RWPE1 (cell line): ENCODE measurements at regions of chr17 and their contacts with region 1.

Region 1: DNA sequence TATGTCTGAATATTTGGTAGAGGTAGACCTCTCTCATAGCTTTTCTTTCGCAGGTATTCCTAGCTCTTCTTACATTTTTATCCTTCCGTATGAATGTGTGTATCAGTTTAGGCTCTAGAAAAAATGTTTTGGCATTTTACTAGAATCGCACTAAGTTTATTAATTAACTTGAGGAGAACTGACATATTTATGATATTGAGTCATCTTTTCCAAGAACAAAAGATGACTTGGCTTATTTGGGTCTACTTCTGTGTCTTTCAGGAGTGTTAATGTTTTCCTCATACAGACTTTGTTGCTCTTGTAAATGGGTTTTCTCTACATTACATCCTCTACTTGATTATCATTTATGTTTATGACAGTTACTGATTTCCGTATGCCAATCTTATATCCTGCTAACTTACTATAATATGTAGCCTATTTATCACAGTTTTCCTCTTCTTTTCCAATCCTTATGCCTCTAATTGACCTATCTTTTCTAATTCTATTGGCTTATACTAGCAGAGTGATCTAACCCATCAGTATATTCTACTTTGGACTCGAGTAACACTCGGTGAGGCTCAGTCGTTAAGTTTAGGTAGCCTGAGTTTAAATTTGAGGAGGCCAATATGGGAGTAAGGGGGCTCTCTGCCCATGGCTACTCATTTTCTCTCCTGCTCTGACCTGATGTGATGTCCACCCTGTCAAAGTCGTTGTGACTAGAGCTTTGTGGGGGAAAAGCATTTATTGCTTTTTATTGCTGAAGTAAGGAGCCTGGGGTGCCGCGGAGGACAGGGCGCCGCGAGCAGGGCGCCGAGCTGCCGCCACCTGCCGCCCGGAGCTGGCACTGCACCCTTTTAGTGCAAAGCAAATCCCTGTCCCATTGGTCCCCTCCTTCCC is 20.0 kb downstream of the ST6GALNAC1 start:
- DNase-seq: peak; percentile 72
- H3K27ac ChIP-seq: no peak overlapping the region
- CTCF ChIP-seq: peak; percentile 98

Region 2: GRCh38 chr17:76557368-76558197 is 65.9 kb before region 1 on chr17:
- CTCF ChIA-PET with region 1: interaction called, 14 read pairs
- POLR2A ChIA-PET with region 1: no interaction called
- DNase-seq: peak; percentile 83
- H3K27ac ChIP-seq: peak overlapping the region; percentile 94
- CTCF ChIP-seq: peak; percentile 55

Region 3: GRCh38 chr17:76585818-76586593 is 37.5 kb before region 1 on chr17 and contains the start of gene ST6GALNAC2:
- CTCF ChIA-PET with region 1: interaction called, 21 read pairs
- POLR2A ChIA-PET with region 1: no interaction called
- DNase-seq: peak; percentile 55
- H3K27ac ChIP-seq: peak within 1 kb of the TSS; percentile 96
- CTCF ChIP-seq: peak; percentile 79

Region 4: DNA sequence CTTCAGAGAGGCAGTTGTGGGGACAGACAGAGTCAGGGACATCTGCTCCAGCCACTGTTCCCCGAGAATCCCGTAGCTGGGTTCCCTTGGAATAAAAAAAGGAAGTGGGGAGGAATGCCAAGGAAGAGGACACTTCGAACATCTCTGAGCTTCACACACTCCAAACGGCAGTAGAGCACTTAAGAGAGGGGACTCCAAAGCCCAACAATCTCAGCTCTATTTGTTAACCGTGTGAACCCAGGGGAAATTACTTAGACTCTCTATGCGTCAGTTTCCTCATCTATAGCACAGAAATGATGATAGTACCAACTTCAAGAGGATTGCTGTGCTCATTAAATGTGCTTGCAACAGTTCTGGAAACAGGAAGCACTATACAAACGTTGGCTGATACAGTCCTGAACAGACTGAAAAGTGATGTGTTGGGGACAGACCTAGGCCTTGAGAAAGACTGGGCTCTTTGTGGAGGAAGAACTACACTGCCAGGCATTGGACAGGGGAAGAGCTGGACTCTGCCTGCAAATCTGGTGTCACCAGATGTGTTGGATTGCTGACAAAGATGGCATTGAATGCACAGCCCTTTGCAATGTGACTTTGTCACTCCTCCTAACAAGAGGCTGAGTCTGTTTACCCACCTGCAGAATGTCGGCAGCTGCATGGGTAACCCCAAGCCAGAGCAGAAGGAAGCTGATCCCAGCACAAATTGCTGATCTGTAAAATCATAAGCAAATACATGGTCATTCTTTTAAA is 25.6 kb before region 1 on chr17:
- CTCF ChIA-PET with region 1: interaction called, 28 read pairs
- POLR2A ChIA-PET with region 1: no interaction called
- DNase-seq: no peak
- H3K27ac ChIP-seq: peak overlapping the region; percentile 79
- CTCF ChIP-seq: no peak

Region 5: DNA sequence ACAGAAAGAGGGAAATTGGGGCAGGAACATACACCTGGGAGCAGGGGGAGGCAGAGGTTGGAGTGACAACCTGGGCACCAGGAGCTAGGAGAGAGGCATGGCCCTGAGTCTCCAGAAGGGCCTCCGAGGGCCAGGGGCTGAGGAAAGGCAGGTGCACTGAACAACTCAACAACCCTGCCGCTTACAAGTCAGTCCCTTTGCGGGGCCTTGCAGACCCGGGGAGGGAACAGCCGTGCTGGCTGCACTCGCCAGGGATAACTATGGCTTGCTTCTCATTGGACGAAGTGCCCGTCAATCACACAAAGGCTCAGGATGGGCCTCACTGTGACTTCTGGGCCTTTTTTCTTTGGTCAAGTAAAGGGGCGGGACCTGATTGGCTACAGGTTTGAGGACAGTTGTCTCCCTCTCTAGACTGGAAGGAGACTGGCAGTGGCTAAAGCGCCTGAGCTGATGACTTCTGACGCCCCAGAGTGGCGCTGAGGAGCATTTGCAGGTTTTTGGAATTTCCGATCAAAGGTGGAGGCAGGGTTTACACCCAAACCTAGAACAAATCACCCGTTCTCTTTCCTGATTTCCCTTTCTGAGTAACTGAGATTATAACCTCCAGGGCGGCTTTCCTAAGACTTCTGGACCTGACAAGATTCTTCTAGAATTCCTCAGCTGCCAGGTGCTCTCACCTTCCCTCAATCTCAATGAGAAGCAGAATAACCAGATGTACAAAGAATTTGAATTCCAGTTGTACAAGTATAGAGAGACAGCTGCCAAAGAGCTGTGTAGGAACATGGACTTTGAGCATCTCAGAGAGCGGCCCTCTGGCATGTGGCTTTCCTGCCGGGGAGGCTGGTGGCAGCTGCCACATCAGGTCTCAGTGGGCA is 10.3 kb before region 1 on chr17:
- CTCF ChIA-PET with region 1: interaction called, 17 read pairs
- POLR2A ChIA-PET with region 1: no interaction called
- DNase-seq: no peak
- H3K27ac ChIP-seq: no peak overlapping the region
- CTCF ChIP-seq: no peak

Region 6: DNA sequence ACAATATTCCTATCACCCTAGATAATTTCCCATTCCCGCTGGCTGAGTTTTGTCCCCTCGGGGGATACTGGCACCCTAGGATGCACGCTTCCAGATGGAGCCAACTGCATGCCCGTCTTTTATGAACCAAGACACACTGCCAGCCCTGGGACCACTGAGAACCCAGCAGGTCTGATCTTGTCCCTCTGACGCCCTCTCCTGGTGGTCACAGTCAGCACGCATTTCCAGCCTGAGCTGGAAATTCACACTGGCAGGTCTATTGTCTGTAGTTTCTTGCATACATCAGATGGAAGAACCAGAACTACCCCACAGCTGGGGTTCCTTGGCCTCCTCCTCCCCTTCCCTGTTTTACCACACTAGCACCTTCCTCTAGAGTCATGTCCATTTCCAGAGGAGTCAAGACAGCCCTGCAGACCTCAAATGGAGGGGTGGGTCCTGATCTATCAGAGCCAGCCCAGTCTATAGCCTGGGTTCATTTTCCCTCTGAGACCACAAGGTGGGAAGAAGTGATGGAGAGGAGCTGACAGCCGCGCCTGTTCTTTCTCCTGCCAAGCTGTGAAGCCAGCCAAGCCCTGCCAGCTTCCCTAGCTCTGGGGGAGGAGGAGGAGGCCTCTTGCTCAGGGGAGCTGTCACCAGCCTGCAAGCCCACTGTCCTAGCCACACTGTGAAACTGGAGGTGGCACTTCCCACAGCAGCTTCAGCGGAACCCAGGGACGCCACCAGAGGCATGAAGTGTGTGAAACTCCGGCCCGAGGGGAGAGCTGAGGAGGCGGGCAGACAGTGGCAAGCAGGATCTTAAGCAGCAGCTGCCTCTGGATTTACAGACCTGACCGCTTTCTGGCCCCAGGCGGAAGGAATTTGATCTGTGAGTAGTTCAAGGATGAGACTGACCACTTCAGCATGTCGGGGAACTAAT is 58.0 kb after region 1 on chr17:
- CTCF ChIA-PET with region 1: interaction called, 18 read pairs
- POLR2A ChIA-PET with region 1: no interaction called
- DNase-seq: peak; percentile 51
- H3K27ac ChIP-seq: peak overlapping the region; percentile 28
- CTCF ChIP-seq: peak; percentile 79